B cell (primary cell): ENCODE measurements at regions of chrX and their contacts with region 1.

Region 1: GRCh38 chrX:14029425-14030173 is at the start of gene GEMIN8:
- DNase-seq: peak; percentile 90
- ATAC-seq: peak; percentile 93
- H3K4me3 ChIP-seq: peak within 1 kb of the TSS; percentile 67 to 92 (median 80)
- H3K4me3 Mint-ChIP-seq: peak within 1 kb of the TSS; percentile 96
- H3K27ac ChIP-seq: peak within 1 kb of the TSS; percentile 82 to 93
- H3K27ac Mint-ChIP-seq: peak within 1 kb of the TSS; percentile 98
- H3K4me1 ChIP-seq: peaks cover 17 to 23% of the 10 kb centered on the region in 2 donors
- H3K4me1 Mint-ChIP-seq: peaks cover 28% of the 10 kb centered on the region
- H3K27me3 ChIP-seq: peaks cover 0 to 13% (median 0%) of the 10 kb centered on the region in 4 experiments
- H3K27me3 Mint-ChIP-seq: no peaks in the 10 kb centered on the region
- CTCF ChIP-seq: no peak
- total RNA-seq, gene GEMIN8: 17.7 and 20.6 TPM in 2 replicates

Region 2: DNA sequence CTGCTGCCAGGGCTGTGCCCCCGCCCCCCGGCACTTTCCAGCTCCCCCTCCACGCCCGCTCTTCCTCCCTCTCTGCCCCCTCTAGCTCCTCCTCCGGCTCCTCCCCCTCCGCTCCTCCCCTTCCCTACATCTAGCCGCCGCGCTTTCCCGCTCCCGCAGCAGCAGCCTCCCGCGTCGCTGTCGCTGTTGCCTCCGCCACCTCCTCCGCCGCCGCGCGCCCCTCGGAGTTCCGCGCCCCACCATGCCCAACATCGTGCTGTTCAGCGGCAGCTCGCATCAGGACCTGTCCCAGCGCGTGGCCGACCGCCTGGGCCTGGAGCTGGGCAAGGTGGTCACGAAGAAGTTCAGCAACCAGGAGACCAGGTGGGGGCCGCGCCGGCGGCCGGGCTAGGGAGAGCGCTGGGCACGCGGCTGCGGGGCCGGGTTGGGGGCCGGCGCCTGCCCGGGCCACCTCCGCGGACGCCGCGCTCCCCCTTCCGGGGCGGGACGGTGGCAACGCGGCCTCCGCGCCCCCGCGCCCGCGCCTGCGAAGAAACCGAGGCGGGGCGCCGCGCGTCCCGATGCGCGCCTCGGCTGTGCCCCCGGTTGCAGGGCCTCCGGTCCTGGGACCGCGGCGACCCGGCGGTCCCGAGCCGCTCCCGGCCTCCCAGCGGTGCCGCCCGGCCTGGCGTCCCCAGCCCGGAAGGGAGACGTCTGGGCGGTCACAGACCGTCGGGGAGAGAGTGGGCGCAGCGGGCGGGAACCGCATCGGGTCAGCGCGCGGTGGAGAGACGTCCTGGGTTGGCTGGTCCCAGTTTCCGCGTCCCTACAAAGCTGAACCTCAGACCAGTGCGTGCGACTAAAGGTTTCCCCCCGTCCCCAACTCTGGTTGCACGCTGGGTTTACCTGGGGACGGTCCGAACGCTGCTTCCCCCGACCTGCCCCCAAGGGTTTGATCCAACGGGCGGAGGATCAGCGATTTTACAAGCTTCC is 1238.1 kb before region 1 on chrX and contains the start of gene PRPS2:
- CTCF ChIA-PET with region 1: no interaction called
- POLR2A ChIA-PET with region 1: no interaction called
- intact Hi-C with region 1: loop called (anchors 5 kb)
- DNase-seq: peak; percentile 70
- ATAC-seq: peak; percentile 90
- H3K4me3 ChIP-seq: peak within 1 kb of the TSS; percentile 39 to 81 (median 71)
- H3K4me3 Mint-ChIP-seq: peak within 1 kb of the TSS; percentile 90
- H3K27ac ChIP-seq: peak within 1 kb of the TSS; percentile 34 to 44
- H3K27ac Mint-ChIP-seq: peak within 1 kb of the TSS; percentile 83
- H3K4me1 ChIP-seq: peaks cover 0 to 11% of the 10 kb centered on the region in 2 donors
- H3K4me1 Mint-ChIP-seq: peaks cover 29% of the 10 kb centered on the region
- H3K27me3 ChIP-seq: no peaks in the 10 kb centered on the region
- H3K27me3 Mint-ChIP-seq: no peaks in the 10 kb centered on the region
- CTCF ChIP-seq: no peak
- total RNA-seq, gene PRPS2: 30.4 and 31.1 TPM in 2 replicates

Region 3: DNA sequence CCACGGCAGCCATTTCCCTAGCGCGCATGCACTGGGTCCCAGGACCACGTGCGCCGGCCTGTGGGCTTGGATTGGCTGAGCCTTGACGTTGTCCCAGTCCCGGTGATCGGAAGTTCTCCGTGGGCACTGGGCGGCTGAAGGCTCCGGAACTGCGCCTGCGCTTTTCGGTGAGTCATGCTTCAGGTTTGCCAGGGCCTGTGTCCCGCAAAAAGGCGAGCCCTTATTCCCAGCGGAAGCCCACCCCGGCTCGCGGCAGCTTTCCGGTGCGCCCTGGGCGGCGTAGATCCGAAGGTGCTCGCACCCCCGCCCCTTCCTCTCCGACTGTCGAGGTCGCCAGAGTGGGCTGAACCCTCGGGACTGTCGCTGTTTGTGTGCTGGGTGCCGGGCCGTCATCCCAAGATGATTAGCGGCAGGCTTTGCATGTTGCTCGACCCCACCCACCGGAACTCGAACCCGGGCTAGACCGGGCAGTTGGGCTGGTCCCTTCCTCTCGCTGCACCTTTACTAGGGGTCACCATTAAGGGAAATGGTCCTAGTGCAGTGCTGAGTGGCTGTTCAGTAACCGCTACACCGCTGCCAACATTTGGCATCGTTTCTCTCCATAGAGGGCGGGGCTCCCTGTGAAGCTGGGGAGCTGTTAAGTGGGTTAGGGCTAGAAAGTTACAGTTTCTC is 376.4 kb before region 1 on chrX and contains the start of gene TCEANC:
- CTCF ChIA-PET with region 1: interaction called, 4 read pairs
- POLR2A ChIA-PET with region 1: interaction called, 3 read pairs
- intact Hi-C with region 1: loop called (anchors 1 kb)
- DNase-seq: peak; percentile 92
- ATAC-seq: peak; percentile 93
- H3K4me3 ChIP-seq: peak within 1 kb of the TSS; percentile 59 to 92 (median 78)
- H3K4me3 Mint-ChIP-seq: peak within 1 kb of the TSS; percentile 94
- H3K27ac ChIP-seq: peak within 1 kb of the TSS; percentile 84 to 96
- H3K27ac Mint-ChIP-seq: peak within 1 kb of the TSS; percentile 96
- H3K4me1 ChIP-seq: peaks cover 12 to 15% of the 10 kb centered on the region in 2 donors
- H3K4me1 Mint-ChIP-seq: peaks cover 11% of the 10 kb centered on the region
- H3K27me3 ChIP-seq: no peaks in the 10 kb centered on the region
- H3K27me3 Mint-ChIP-seq: no peaks in the 10 kb centered on the region
- CTCF ChIP-seq: no peak
- total RNA-seq, gene TCEANC: 10.0 and 10.7 TPM in 2 replicates

Region 4: DNA sequence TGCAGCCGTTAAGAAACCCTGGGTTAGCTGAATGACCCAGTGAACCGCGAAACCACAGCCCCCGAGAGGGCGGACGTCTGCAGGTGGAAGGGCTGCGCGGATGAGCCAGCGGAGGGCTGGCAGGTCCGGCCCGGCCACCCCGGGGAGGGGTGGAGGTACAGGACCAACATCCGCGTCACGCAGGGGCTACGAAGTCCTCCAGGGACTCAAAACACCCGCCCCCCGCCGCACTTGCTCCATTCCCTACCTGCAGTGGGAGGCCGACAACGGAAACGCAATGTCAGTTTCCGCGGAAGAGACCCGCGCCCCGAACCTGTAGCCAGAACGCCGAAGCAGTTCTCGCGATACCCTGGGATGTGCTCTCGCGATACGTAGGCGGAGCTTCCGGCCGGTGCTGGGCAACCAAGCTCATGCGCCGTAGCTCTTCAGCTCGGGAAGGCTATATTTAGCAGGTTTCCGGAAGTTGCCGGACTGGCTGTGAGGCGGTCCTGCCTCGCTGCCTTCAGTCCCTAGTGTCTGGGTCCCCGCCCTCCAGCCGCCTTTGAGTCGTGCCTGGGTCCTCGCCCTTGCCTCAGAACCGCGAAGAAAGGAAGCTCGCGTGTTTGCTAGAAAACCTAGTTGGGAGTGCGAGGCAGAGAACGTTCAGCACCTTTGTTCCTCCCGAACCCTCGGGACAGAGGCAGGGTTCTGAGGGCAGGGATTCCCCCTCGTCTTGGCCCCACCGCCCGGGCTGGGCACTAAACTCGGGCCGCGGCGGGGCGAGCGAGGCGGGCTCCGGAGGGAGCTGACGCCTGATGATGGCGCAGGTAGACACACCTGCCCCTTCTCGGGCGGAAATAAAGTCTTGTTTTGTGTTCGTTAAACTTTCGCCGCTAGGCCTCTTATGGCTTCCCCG is 295.1 kb before region 1 on chrX and contains the starts of genes OFD1 and TRAPPC2:
- CTCF ChIA-PET with region 1: interaction called, 3 read pairs
- POLR2A ChIA-PET with region 1: no interaction called
- intact Hi-C with region 1: loop called (anchors 2 kb)
- DNase-seq: peak; percentile 94
- ATAC-seq: peak; percentile 80
- H3K4me3 ChIP-seq: peak within 1 kb of the TSS; percentile 73 to 98 (median 76)
- H3K4me3 Mint-ChIP-seq: peak within 1 kb of the TSS; percentile 93
- H3K27ac ChIP-seq: peak within 1 kb of the TSS; percentile 95 to 97
- H3K27ac Mint-ChIP-seq: peak within 1 kb of the TSS; percentile 97
- H3K4me1 ChIP-seq: peaks cover 40 to 43% of the 10 kb centered on the region in 2 donors
- H3K4me1 Mint-ChIP-seq: peaks cover 52% of the 10 kb centered on the region
- H3K27me3 ChIP-seq: no peaks in the 10 kb centered on the region
- H3K27me3 Mint-ChIP-seq: no peaks in the 10 kb centered on the region
- CTCF ChIP-seq: no peak
- total RNA-seq, gene OFD1: 84.9 and 87.8 TPM in 2 replicates
- total RNA-seq, gene TRAPPC2: 28.0 and 30.3 TPM in 2 replicates

Region 5: GRCh38 chrX:14064626-14065432 is 35.2 kb after region 1 on chrX:
- CTCF ChIA-PET with region 1: no interaction called
- POLR2A ChIA-PET with region 1: no interaction called
- intact Hi-C with region 1: no loop called
- DNase-seq: no peak
- ATAC-seq: no peak
- H3K4me3 ChIP-seq: no peak overlapping the region
- H3K4me3 Mint-ChIP-seq: no peak overlapping the region
- H3K27ac ChIP-seq: no peak overlapping the region
- H3K27ac Mint-ChIP-seq: no peak overlapping the region
- H3K4me1 ChIP-seq: no peaks in the 10 kb centered on the region
- H3K4me1 Mint-ChIP-seq: no peaks in the 10 kb centered on the region
- H3K27me3 ChIP-seq: no peaks in the 10 kb centered on the region
- H3K27me3 Mint-ChIP-seq: peaks cover 3% of the 10 kb centered on the region
- CTCF ChIP-seq: no peak

Region 6: GRCh38 chrX:14697451-14697850 is 667.9 kb after region 1 on chrX:
- CTCF ChIA-PET with region 1: no interaction called
- POLR2A ChIA-PET with region 1: no interaction called
- intact Hi-C with region 1: loop called (anchors 10 kb)
- DNase-seq: peak; percentile 25
- ATAC-seq: no peak
- H3K4me3 ChIP-seq: no peak overlapping the region
- H3K4me3 Mint-ChIP-seq: no peak overlapping the region
- H3K27ac ChIP-seq: no peak overlapping the region
- H3K27ac Mint-ChIP-seq: no peak overlapping the region
- H3K4me1 ChIP-seq: no peaks in the 10 kb centered on the region
- H3K4me1 Mint-ChIP-seq: no peaks in the 10 kb centered on the region
- H3K27me3 ChIP-seq: no peaks in the 10 kb centered on the region
- H3K27me3 Mint-ChIP-seq: no peaks in the 10 kb centered on the region
- CTCF ChIP-seq: peak; percentile 51

Region 7: GRCh38 chrX:15674841-15675489 is 1645.4 kb after region 1 on chrX:
- CTCF ChIA-PET with region 1: no interaction called
- POLR2A ChIA-PET with region 1: no interaction called
- intact Hi-C with region 1: loop called (anchors 5 kb)
- DNase-seq: peak; percentile 96
- ATAC-seq: peak; percentile 81
- H3K4me3 ChIP-seq: peak overlapping the region; percentile 67 to 99 (median 80)
- H3K4me3 Mint-ChIP-seq: no peak overlapping the region
- H3K27ac ChIP-seq: peak overlapping the region; percentile 98 to 100
- H3K27ac Mint-ChIP-seq: no peak overlapping the region
- H3K4me1 ChIP-seq: peaks cover 16 to 17% of the 10 kb centered on the region in 2 donors
- H3K4me1 Mint-ChIP-seq: peaks cover 15% of the 10 kb centered on the region
- H3K27me3 ChIP-seq: no peaks in the 10 kb centered on the region
- H3K27me3 Mint-ChIP-seq: no peaks in the 10 kb centered on the region
- CTCF ChIP-seq: no peak